Sciatic nerve (tissue), 2 donors: ENCODE measurements at regions of chr6 and their contacts with region 1.

Region 1: GRCh38 chr6:99312354-99312753 is 37.1 kb downstream of the FAXC start:
- DNase-seq: no peak
- ATAC-seq: no peak

Region 2: DNA sequence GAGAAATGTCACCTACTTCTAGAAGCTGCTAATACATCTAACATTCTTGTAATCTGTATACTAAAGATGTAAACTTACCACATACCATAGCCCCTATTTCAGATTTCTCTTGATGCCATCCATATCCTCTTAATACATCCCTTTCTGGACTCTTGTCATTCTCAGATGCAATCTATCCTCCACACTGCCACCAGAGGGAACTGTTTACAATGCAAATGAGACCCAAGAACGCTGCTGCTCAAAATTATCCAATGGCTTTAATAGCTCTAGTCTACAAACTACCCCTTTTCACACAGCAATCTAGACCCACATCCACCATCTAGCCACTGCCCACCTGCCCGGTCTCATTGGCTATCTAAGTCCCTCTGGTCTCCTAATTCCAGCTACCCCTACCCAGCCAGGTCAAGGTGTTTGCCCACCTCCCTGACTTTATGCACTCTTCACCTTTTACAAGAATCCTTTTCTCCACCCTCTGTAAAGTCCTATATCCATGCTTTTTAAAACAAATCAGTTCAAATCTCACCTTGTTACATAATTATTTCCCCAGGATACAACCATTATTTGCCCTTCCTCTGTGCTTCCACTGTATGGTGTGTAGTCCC is 22.3 kb after region 1 on chr6:
- intact Hi-C with region 1: loop called (anchors 2 kb)
- DNase-seq: no peak
- ATAC-seq: no peak